ENCODE measurements at regions of chr11 and their contacts with region 1.

Region 1: DNA sequence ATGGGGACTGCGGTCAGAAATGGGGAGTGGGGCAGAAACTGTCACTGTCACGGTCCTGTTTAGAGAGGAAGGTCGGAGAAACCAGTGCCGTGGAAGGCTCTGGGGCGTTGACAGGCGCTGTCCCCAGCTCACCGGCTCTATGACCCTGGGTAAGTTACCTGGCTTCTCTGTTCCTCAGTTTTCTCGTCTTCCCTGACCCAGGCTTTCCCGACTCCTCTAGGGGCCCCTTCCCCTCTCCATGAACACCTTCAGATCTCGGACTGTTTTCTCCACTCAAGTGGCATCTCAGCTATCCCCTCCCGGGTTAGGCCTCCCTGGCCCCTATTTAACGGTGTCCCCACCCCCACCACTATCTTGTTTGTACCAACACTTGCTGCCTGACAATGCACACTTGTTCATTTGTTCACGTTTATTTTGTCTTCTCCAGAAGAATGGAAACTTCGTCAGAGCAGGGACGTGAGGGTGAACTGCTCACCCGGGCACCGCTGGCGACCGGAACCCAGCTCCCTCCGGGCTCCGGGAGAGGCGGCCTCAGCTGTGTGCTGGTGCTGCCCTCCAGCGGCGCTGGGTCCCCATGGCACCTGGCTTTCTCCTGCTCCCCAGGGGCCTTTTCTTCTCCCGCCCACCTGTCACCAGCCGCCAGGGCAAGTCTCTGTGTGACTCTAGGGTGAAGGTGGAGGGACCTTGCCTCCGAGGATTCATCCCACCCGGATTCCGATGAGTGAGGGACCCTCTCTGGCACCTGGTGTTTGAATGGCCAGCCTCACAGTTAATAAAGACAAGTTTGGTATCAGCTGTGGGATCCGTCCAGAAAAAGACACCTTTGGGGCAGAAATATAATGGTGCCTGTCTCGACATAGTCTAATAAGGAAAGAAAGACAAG is 33.1 kb upstream of the SLC35C1 start:
- DNase-seq: no peak
- ATAC-seq: peak; percentile 97
- H3K4me3 ChIP-seq: peak overlapping the region; percentile 45; the same call in 1 of the 2 replicates
- H3K27ac ChIP-seq: no peak overlapping the region
- H3K4me1 ChIP-seq: peaks cover 16% of the 10 kb centered on the region
- H3K27me3 ChIP-seq: peaks cover 0 to 7% of the 10 kb centered on the region in 2 experiments; a peak in 2 of 4 replicates
- CTCF ChIP-seq: peak; percentile 91 to 97 (median 97); a peak in 5 of 6 replicates
- EP300 ChIP-seq: no peak
- POLR2A ChIP-seq: no peak
- RAD21 ChIP-seq: peak; percentile 73

Region 2: GRCh38 chr11:45110562-45110961 is 661.2 kb before region 1 on chr11:
- CTCF ChIA-PET with region 1: interaction called, 5 read pairs
- POLR2A ChIA-PET with region 1: no interaction called
- RAD21 ChIA-PET with region 1: interaction called, 3 read pairs
- SMC1A ChIA-PET with region 1: no interaction called
- in situ Hi-C with region 1: no loop called
- intact Hi-C with region 1: loop called (anchors 10 kb)
- DNase-seq: no peak
- ATAC-seq: peak; percentile 78
- H3K4me3 ChIP-seq: no peak overlapping the region
- H3K27ac ChIP-seq: no peak overlapping the region
- H3K4me1 ChIP-seq: no peaks in the 10 kb centered on the region
- H3K27me3 ChIP-seq: no peaks in the 10 kb centered on the region; a peak in 1 of 4 replicates
- CTCF ChIP-seq: peak; percentile 54 to 76 (median 60)
- EP300 ChIP-seq: no peak
- POLR2A ChIP-seq: no peak
- RAD21 ChIP-seq: peak; percentile 85

Region 3: DNA sequence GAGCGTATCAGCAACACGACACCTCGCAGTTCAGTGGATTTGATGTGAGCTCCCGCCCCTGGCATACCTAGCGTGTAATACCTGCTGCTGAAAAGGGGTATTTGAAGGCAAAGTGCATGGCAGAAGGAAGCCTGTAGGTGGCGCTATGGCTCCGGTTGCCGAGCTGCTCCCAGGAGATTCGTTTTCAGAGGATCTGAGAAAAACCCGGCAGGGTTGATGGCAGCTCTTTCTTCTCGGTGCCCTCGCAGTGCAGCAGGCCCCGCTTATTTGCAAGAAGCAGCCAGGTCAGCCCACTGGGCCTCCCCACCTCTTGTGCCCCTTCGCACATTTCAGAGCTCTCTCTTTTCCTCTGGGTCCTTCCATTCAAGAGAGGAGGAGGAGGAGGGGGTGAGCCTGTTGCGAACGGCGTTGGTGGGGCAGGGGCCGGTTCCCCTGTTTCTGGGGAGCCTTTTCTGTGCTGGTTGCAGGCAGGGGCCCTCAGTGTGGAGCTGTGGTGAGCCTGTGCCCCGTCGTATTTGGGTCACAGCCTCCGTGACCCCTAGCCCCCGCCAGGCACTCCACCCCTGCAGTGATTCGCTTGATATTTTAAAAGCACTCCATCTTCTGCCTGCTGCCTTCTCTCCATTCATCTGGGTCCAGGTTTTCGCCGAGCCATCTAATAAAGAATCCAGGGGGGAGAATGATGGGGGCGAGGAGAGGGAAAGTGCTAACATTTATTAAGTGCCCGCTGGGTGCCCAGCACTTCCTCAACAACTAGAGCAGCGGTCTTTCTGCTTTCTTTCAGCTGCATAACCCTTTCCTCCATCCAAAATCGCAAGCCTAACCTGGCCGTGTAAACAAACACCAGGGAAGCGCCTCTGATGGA is 400.3 kb before region 1 on chr11:
- CTCF ChIA-PET with region 1: interaction called, 29 read pairs
- POLR2A ChIA-PET with region 1: no interaction called
- RAD21 ChIA-PET with region 1: interaction called, 20 read pairs
- SMC1A ChIA-PET with region 1: interaction called, 11 read pairs
- in situ Hi-C with region 1: loop called (anchors 10 kb)
- intact Hi-C with region 1: loop called (anchors 1 kb)
- DNase-seq: no peak
- ATAC-seq: peak; percentile 89
- H3K4me3 ChIP-seq: no peak overlapping the region
- H3K27ac ChIP-seq: no peak overlapping the region
- H3K4me1 ChIP-seq: no peaks in the 10 kb centered on the region
- H3K27me3 ChIP-seq: peaks cover 0 to 6% of the 10 kb centered on the region in 2 experiments; a peak in 2 of 4 replicates
- CTCF ChIP-seq: peak; percentile 81 to 90 (median 86)
- EP300 ChIP-seq: no peak
- POLR2A ChIP-seq: no peak
- RAD21 ChIP-seq: peak; percentile 70

Region 4: DNA sequence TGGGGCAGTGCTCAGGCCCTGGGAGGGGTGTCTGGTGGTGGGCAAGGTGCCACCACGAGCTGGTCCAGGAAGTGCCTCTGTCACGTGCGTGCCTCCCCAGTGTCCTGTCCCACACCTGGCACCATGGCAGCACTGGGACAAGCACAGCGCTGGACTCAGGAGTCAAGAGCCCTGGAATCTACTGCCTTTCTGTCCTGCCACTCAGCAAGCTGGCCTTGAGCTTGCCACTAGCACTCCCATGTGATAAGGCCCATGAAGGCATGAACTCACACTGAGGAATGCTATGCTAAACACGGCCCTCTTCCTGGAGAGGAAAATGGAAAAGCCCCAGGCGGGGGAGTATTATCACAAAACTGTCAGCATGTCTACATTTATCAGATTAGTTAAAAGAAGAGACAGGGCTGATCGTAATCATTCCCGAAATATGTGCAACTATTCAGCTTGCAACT is 17.5 kb before region 1 on chr11:
- CTCF ChIA-PET with region 1: interaction called, 12 read pairs
- POLR2A ChIA-PET with region 1: no interaction called
- RAD21 ChIA-PET with region 1: no interaction called
- SMC1A ChIA-PET with region 1: no interaction called
- in situ Hi-C with region 1: no loop called
- intact Hi-C with region 1: no loop called
- DNase-seq: no peak
- ATAC-seq: no peak
- H3K4me3 ChIP-seq: no peak overlapping the region
- H3K27ac ChIP-seq: no peak overlapping the region
- H3K4me1 ChIP-seq: no peaks in the 10 kb centered on the region
- H3K27me3 ChIP-seq: peaks cover 0 to 1% of the 10 kb centered on the region in 2 experiments; a peak in 1 of 4 replicates
- CTCF ChIP-seq: no peak
- EP300 ChIP-seq: no peak
- POLR2A ChIP-seq: no peak
- RAD21 ChIP-seq: no peak

Region 5: GRCh38 chr11:45846974-45847910 is 75.4 kb after region 1 on chr11 and contains the start of gene CRY2:
- CTCF ChIA-PET with region 1: interaction called, 34 read pairs
- POLR2A ChIA-PET with region 1: interaction called, 3 read pairs
- RAD21 ChIA-PET with region 1: interaction called, 8 read pairs
- SMC1A ChIA-PET with region 1: interaction called, 11 read pairs
- in situ Hi-C with region 1: no loop called
- intact Hi-C with region 1: no loop called
- DNase-seq: peak; percentile 90
- ATAC-seq: peak; percentile 93
- H3K4me3 ChIP-seq: peak within 1 kb of the TSS; percentile 78
- H3K27ac ChIP-seq: peak within 1 kb of the TSS; percentile 48
- H3K4me1 ChIP-seq: peaks cover 5% of the 10 kb centered on the region
- H3K27me3 ChIP-seq: no peaks in the 10 kb centered on the region
- CTCF ChIP-seq: no peak
- EP300 ChIP-seq: peak in 1 of 2 experiments; percentile 58; a peak in 2 of 4 replicates
- POLR2A ChIP-seq: peak; percentile 99
- RAD21 ChIP-seq: no peak
- polyA plus RNA-seq, gene CRY2: 1.2 to 1.4 TPM

Region 6: DNA sequence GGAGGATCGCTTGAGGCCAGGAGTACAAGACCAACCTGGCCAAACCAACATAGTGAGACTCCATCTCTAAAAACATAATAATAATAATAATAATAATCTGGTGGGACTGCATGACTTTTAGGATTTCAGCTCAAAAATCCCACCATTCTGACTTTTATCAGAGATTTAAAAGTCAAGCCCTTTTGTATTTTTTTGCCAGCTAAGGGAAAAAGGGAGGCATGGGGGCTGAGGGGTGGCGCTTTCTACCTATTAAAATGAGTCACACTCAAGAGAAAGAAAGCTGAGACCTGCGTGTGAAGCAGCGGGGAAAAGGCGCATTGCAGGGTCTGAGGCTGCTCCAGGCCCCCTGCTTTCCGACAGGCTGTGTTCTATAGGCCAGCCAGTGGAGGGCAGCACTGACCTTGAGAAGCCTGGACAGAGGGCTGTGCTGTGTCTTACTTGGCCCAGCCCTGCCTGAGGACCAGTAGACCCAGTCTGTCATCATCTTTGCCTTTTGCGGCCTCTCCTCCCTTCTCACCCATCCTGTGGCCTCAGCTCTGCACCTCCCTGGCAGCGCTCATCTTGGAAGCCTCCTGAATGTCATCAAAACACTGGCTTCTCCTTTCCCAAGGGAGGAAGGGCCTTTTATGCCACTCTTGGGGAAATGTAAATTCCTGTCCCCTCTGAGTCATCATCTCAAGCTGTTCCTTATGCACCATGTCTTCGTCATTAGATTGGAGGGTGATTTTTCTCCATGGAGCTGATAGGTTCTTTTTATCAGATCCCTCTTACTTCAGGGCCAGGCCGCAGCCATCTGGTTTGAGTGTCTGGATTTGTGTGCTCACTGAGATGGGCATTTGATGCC is 100.9 kb after region 1 on chr11:
- CTCF ChIA-PET with region 1: interaction called, 12 read pairs
- POLR2A ChIA-PET with region 1: no interaction called
- RAD21 ChIA-PET with region 1: interaction called, 3 read pairs
- SMC1A ChIA-PET with region 1: no interaction called
- in situ Hi-C with region 1: no loop called
- intact Hi-C with region 1: no loop called
- DNase-seq: no peak
- ATAC-seq: peak; percentile 97
- H3K4me3 ChIP-seq: no peak overlapping the region
- H3K27ac ChIP-seq: no peak overlapping the region
- H3K4me1 ChIP-seq: no peaks in the 10 kb centered on the region
- H3K27me3 ChIP-seq: no peaks in the 10 kb centered on the region
- CTCF ChIP-seq: peak; percentile 54 to 73 (median 63)
- EP300 ChIP-seq: no peak
- POLR2A ChIP-seq: no peak
- RAD21 ChIP-seq: peak; percentile 55